HepG2 (cell line): ENCODE measurements at regions of chr7 and their contacts with region 1.

Region 1: DNA sequence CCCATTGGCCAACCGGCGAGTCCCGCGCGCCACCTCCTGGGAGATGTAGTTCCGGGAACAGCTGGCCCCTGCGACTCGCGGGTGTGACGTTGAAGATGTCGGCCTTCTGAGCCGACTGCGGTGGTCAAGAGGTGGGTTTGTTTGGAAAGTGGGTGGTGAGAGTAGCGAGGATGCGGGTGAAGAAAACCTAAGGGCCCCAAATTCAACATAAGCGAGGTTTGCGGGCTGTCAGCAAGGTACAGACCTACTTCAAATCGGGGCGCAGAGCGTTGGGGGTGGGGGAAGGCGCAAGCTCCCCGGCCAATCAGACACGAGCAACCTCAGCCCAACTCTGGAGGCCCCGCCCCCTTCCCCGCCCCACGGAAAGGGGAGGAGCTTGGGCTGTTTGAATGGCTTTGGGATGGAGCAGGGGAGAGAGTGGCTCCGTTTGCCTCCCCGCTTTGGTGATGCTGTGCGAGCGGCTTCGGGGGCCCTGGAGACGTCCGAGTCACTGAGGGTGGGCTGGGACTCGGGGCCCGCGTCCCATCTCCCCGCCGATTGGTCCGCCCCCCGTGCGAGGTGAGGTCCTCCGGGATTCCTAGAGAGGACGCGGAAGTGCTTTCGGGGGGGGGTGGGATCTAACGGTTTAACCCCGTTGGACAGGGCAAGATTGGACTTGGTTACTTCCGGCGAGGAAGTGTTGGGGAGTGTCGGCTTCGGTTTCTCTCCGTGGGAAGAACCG is at the start of gene ZKSCAN5:
- DNase-seq: peak; percentile 90
- ATAC-seq: peak; percentile 81
- H3K4me3 ChIP-seq: peak within 1 kb of the TSS; percentile 87 to 94 (median 88)
- H3K27ac ChIP-seq: peak within 1 kb of the TSS; percentile 76
- H3K4me1 ChIP-seq: peaks cover 25% of the 10 kb centered on the region
- H3K27me3 ChIP-seq: no peaks in the 10 kb centered on the region; a peak in 1 of 5 replicates
- CTCF ChIP-seq: no peak; the same call in 1 of the 2 replicates
- EP300 ChIP-seq: no peak
- POLR2A ChIP-seq: peak; percentile 85 to 91
- RAD21 ChIP-seq: no peak
- total RNA-seq, gene ZKSCAN5: 11.7 and 14.4 TPM in 2 replicates

Region 2: GRCh38 chr7:99331002-99331401 is 173.8 kb before region 1 on chr7:
- CTCF ChIA-PET with region 1: no interaction called
- POLR2A ChIA-PET with region 1: no interaction called
- in situ Hi-C with region 1: no loop called
- intact Hi-C with region 1: no loop called
- DNase-seq: no peak
- ATAC-seq: no peak
- H3K4me3 ChIP-seq: no peak overlapping the region
- H3K27ac ChIP-seq: no peak overlapping the region
- H3K4me1 ChIP-seq: peaks cover 40% of the 10 kb centered on the region
- H3K27me3 ChIP-seq: no peaks in the 10 kb centered on the region
- CTCF ChIP-seq: no peak
- EP300 ChIP-seq: no peak
- POLR2A ChIP-seq: no peak
- RAD21 ChIP-seq: no peak

Region 3: GRCh38 chr7:99465421-99465768 is 39.4 kb before region 1 on chr7:
- CTCF ChIA-PET with region 1: no interaction called
- POLR2A ChIA-PET with region 1: interaction called, 14 read pairs
- in situ Hi-C with region 1: no loop called
- intact Hi-C with region 1: no loop called
- DNase-seq: peak; percentile 38
- ATAC-seq: peak; percentile 33
- H3K4me3 ChIP-seq: peak overlapping the region; percentile 80 to 94 (median 82)
- H3K27ac ChIP-seq: peak overlapping the region; percentile 89
- H3K4me1 ChIP-seq: peaks cover 56% of the 10 kb centered on the region
- H3K27me3 ChIP-seq: no peaks in the 10 kb centered on the region; a peak in 1 of 5 replicates
- CTCF ChIP-seq: no peak
- EP300 ChIP-seq: no peak
- POLR2A ChIP-seq: no peak
- RAD21 ChIP-seq: no peak

Region 4: DNA sequence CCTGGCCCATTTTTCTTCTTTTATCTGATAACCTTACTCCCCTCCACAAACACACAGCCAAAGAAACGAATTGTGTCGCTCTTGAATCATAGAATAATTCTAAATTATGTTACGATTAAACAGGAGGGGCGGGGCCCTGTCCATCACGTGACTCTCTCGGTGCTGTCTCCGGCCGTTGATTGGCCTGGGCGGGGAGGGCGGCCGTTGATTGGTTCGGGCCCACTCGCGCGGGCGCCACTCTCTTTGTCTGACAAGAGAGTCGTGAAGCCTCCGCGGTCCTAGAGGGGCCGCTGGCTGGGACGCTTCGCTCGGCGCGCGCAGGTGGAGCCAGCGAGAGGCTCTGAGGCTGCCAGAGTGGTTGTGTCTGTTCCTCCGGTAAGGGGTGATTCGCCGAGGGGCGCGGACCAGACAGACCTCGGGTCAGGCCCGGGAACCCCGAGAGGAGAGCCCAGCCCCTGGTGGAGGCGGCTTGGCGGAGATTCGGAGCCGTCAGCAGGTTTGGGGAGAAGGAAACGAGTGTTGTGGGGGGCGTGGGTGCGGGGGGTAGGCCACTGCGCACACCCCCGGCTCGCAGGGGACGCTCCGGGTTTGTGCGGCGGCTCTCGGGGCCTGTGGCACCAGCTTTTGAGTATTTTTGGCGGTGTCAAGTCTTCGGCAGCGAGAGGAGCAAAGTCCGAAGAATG is 32.1 kb before region 1 on chr7 and contains the start of gene ZNF789:
- CTCF ChIA-PET with region 1: no interaction called
- POLR2A ChIA-PET with region 1: interaction called, 15 read pairs
- in situ Hi-C with region 1: no loop called
- intact Hi-C with region 1: no loop called
- DNase-seq: peak; percentile 94
- ATAC-seq: peak; percentile 95
- H3K4me3 ChIP-seq: peak within 1 kb of the TSS; percentile 73 to 86 (median 79)
- H3K27ac ChIP-seq: peak within 1 kb of the TSS; percentile 84
- H3K4me1 ChIP-seq: peaks cover 55% of the 10 kb centered on the region
- H3K27me3 ChIP-seq: no peaks in the 10 kb centered on the region
- CTCF ChIP-seq: no peak
- EP300 ChIP-seq: peak in 1 of 2 experiments; percentile 17; a peak in 1 of 4 replicates
- POLR2A ChIP-seq: peak; percentile 79 to 87
- RAD21 ChIP-seq: no peak
- total RNA-seq, gene ZNF789: 15.3 and 19.8 TPM in 2 replicates

Region 5: GRCh38 chr7:99558306-99559174 is 53.8 kb after region 1 on chr7 and contains the start of gene ZNF655:
- CTCF ChIA-PET with region 1: no interaction called
- POLR2A ChIA-PET with region 1: interaction called, 42 read pairs
- in situ Hi-C with region 1: no loop called
- intact Hi-C with region 1: loop called (anchors 5 kb)
- DNase-seq: peak; percentile 90
- ATAC-seq: peak; percentile 96
- H3K4me3 ChIP-seq: peak within 1 kb of the TSS; percentile 87 to 99 (median 98)
- H3K27ac ChIP-seq: peak within 1 kb of the TSS; percentile 95
- H3K4me1 ChIP-seq: peaks cover 43% of the 10 kb centered on the region
- H3K27me3 ChIP-seq: no peaks in the 10 kb centered on the region; a peak in 1 of 5 replicates
- CTCF ChIP-seq: no peak
- EP300 ChIP-seq: no peak
- POLR2A ChIP-seq: peak; percentile 67 to 94
- RAD21 ChIP-seq: peak; percentile 28; the same call in 1 of the 2 replicates
- total RNA-seq, gene ZNF655: 53.4 and 54.8 TPM in 2 replicates

Region 6: GRCh38 chr7:99616359-99617191 is 111.8 kb after region 1 on chr7 and contains the start of gene ZSCAN25:
- CTCF ChIA-PET with region 1: no interaction called
- POLR2A ChIA-PET with region 1: interaction called, 12 read pairs
- in situ Hi-C with region 1: no loop called
- intact Hi-C with region 1: no loop called
- DNase-seq: peak; percentile 91
- ATAC-seq: peak; percentile 96
- H3K4me3 ChIP-seq: peak within 1 kb of the TSS; percentile 93 to 98 (median 96)
- H3K27ac ChIP-seq: peak within 1 kb of the TSS; percentile 96
- H3K4me1 ChIP-seq: peaks cover 25% of the 10 kb centered on the region
- H3K27me3 ChIP-seq: no peaks in the 10 kb centered on the region; a peak in 1 of 5 replicates
- CTCF ChIP-seq: peak; percentile 97
- EP300 ChIP-seq: no peak
- POLR2A ChIP-seq: peak; percentile 82 to 83
- RAD21 ChIP-seq: peak; percentile 71
- total RNA-seq, gene ZSCAN25: 16.3 and 16.8 TPM in 2 replicates